Colonic mucosa (tissue), 4 donors: ENCODE measurements at regions of chr5 and their contacts with region 1.

Region 1: DNA sequence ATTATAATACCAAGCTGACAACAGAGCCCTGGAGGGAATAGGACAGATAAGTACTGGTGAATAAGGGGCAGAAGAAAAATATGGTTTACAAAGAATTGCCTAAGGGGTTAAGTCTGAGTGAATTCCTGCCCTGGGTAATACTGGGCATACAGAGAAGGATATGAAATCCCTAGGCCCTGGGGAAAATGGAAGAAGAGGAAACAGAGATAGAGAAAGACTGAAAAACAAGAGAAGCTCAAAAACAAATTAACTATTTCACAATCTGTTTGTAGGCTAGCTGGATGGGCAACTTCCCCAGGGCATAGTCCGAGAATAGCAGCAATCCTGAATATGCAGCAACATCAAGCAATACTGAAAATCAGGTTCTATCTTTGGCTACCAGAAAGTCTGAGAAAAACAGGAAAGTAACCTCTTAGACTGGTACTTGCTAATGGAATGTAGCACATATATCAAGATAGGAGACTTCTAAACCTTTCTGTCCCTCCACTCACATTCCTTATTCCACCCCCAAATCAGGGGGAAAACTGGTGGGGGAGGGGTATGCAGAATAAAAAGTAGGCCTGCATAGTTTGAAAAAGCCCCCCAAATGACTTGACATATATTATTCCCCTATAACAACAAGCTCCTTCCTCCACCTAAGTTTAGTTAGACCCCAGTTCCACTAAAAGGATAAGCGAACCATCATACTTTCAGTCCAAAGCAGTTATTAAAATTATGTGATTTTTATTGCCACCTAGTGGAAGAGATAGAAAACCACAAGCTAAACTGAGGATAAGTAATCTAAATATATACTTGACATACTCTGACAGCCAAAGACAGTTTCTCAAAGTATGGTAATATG is 20.6 kb downstream of the SLC38A9 start:
- DNase-seq: no peak
- H3K4me3 ChIP-seq: no peak overlapping the region
- H3K27ac ChIP-seq: no peak overlapping the region
- H3K4me1 ChIP-seq: no peaks in the 10 kb centered on the region
- H3K27me3 ChIP-seq: no peaks in the 10 kb centered on the region
- CTCF ChIP-seq: peak; percentile 67

Region 2: DNA sequence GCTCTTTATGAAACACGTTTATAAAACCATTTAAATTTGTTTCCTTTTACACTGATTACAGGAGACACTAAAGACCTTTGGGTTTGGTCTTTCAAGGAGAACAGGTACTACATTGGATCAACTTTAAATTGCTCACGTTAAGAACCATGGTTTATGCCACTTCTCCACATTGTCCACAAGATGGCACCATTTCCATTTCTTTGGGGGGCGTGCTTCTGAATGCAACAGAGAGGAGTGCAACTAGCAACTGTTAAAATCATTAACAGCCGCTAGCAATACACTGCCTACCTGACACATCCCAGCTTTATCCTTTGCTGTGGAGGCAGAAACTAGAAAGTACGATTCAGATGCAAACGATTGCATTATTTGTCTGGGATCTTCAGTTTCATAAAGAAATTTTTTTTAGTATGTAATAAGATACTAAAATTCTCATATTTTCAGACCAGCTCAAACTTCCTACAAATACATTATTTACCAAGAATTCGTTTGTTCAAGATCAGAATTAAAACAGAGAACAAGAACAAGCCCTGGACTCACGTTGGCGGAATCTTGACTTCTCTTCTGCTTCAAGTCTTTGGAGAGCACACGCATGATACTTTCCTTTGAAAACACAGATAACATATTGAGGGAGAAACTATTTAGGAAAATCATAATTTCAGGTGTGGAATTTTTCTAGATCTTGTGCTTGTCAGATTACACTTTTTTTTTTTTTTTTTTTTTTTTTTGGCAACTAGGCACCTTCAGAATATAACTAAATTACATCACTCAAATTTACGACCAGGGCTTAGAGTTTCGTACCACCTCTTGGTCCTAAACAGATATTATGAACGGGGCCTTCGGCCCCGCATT is 519.2 kb before region 1 on chr5:
- intact Hi-C with region 1: loop called (anchors 5 kb)
- DNase-seq: peak; percentile 64
- H3K4me3 ChIP-seq: peak overlapping the region; percentile 42
- H3K27ac ChIP-seq: no peak overlapping the region
- H3K4me1 ChIP-seq: peaks cover 10% of the 10 kb centered on the region
- H3K27me3 ChIP-seq: peaks cover 30% of the 10 kb centered on the region
- CTCF ChIP-seq: peak; percentile 87

Region 3: GRCh38 chr5:55344392-55344992 is 347.0 kb before region 1 on chr5:
- intact Hi-C with region 1: loop called (anchors 5 kb)
- DNase-seq: peak; percentile 77
- H3K4me3 ChIP-seq: no peak overlapping the region
- H3K27ac ChIP-seq: no peak overlapping the region
- H3K4me1 ChIP-seq: no peaks in the 10 kb centered on the region
- H3K27me3 ChIP-seq: no peaks in the 10 kb centered on the region
- CTCF ChIP-seq: peak; percentile 94

Region 4: DNA sequence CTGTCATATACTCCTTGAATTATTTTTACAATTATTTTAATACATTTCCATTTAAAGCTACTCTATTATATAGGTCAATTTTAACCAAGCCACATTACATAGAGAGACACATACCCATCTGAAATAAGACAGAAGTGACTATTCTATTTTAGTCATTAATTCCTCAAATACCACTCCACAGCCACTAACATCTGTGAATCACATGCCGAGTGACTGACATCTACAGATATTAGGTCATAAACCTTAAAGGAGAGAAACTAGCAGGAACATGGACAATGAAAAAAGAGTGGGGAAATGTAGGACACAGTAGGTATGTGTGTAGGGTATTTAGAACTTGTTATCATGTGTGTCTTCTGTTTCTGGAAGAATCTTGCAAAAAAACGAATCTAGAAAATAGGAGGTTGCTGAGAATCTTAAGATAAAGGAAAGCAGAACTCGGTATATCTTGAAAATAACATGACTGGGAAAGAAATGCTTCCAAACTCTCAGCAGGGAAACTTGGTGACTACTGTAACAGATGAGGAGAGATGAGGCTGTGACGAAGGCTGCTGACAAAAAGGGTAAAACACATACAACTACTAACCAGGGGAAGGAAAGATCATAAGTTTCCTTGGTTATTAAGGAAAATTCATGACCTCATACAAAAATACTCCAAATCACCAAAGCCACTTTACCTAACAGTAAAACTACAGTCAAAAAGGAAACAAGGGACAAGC is 241.3 kb before region 1 on chr5:
- intact Hi-C with region 1: no loop called
- DNase-seq: no peak
- H3K4me3 ChIP-seq: no peak overlapping the region
- H3K27ac ChIP-seq: no peak overlapping the region
- H3K4me1 ChIP-seq: peaks cover 4% of the 10 kb centered on the region
- H3K27me3 ChIP-seq: no peaks in the 10 kb centered on the region
- CTCF ChIP-seq: no peak

Region 5: DNA sequence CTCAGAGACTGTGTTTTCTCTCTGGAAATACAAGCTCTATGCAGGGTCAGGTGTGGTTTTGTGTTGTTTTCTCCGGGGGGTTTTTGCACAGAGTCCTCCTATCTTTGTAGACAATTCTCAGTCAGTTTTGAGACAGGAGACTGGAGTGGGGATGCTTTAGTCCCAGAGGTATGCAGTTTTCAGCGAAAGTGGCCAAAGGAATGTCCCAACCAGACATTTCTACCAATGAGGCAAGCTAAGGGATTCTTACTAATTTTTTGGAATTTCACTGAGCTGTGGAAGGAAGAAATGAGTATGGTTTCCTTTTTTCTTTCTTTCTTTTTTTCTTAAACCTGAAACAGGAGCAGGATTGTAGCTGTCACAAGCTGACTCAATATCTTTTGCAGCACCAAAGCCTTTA is 121.5 kb before region 1 on chr5:
- intact Hi-C with region 1: no loop called
- DNase-seq: no peak
- H3K4me3 ChIP-seq: no peak overlapping the region
- H3K27ac ChIP-seq: no peak overlapping the region
- H3K4me1 ChIP-seq: no peaks in the 10 kb centered on the region
- H3K27me3 ChIP-seq: no peaks in the 10 kb centered on the region
- CTCF ChIP-seq: no peak